Activated CD8-positive, alpha-beta T cell treated with anti-CD3 and anti-CD28 coated beads, Interleukin-2, amount 10 ng/mL, durations not matched to agents 7 days and 5 days (primary cell): ENCODE measurements at regions of chr6 and their contacts with region 1.

Region 1: GRCh38 chr6:52419809-52420670 is at the start of gene EFHC1:
- DNase-seq: peak; percentile 99
- ATAC-seq: peak; percentile 93
- H3K4me3 Mint-ChIP-seq: no peak within 1 kb of the TSS
- H3K27ac Mint-ChIP-seq: peak within 1 kb of the TSS; percentile 75
- H3K4me1 Mint-ChIP-seq: peaks cover 27% of the 10 kb centered on the region
- H3K27me3 Mint-ChIP-seq: no peaks in the 10 kb centered on the region
- total RNA-seq, gene EFHC1: 1.4 to 2.5 TPM

Region 2: DNA sequence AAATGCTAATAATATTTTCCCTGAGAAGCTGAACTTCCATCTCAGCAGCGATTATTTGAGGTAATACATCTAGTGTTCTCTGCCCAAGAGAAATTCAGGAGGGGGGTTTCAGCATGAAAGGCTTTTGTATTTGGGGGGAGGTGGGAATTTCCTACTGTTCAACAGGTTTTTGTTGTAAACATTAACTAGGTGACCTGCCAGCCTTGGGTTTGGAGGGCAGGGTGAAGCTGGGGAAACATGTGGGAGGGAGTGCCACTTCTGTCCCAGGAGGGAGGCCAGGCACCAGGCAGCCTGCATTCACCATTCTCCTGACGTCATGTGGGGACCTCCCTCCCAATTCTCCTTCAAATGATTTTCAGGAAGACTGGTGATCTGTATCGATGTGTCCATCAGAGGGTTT is 294.9 kb before region 1 on chr6:
- CTCF ChIA-PET with region 1: no interaction called
- POLR2A ChIA-PET with region 1: no interaction called
- DNase-seq: no peak
- ATAC-seq: no peak
- H3K4me3 Mint-ChIP-seq: no peak overlapping the region
- H3K27ac Mint-ChIP-seq: no peak overlapping the region
- H3K4me1 Mint-ChIP-seq: no peaks in the 10 kb centered on the region
- H3K27me3 Mint-ChIP-seq: peaks cover 21% of the 10 kb centered on the region

Region 3: DNA sequence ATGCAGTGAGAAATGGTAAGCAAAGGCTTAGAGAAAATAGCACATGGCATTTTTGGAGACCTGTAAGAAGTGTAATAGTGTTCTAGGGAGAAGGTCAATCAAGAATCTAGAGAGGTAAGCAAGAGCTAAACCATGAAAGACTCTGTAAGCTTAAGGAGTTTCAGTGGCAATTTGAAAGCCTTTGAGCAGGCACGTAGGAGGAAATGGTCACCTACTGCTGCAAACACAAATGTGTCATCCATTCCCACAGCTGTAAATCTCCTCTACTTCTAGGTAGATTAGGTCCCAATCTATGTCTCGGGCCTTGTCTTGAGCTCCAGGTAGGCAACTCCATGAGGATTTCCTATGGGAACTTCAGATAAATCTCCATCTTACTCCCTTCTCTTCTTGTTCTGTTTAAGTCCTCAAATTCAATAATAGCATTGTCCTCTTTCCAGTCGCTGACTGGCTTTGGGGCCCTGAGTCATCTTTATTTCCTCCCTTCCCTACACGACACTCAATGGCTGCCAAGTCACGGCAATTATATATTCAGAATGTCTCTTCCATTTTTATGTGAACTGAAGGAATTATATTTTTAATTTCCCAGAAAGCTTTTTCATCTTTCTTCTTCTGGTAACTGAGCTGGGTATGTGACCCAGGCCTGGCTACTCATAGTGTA is 82.3 kb before region 1 on chr6:
- CTCF ChIA-PET with region 1: no interaction called
- POLR2A ChIA-PET with region 1: no interaction called
- DNase-seq: peak; percentile 32
- ATAC-seq: no peak
- H3K4me3 Mint-ChIP-seq: no peak overlapping the region
- H3K27ac Mint-ChIP-seq: peak overlapping the region; percentile 53
- H3K4me1 Mint-ChIP-seq: peaks cover 72% of the 10 kb centered on the region
- H3K27me3 Mint-ChIP-seq: no peaks in the 10 kb centered on the region

Region 4: DNA sequence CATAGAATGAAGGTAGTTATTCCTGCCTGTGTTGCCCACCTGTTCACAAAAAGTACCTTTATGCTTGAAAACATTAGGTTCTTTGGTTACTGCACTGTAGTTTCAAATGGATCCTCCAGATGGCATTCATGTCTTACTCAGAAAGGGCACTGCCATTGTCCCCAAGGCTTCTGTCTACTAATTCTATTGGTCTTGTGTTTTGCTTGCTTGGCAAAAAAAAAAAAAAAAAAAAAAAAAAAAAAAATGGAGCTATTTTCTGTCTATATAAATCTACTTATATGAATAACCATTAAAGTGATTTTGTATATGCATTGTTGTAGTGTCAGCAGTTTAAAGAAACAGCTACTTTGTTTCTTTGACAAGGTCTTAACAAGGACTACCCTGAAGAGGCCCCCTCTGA is 12.6 kb before region 1 on chr6:
- CTCF ChIA-PET with region 1: interaction called, 79 read pairs
- POLR2A ChIA-PET with region 1: interaction called, 3 read pairs
- DNase-seq: peak; percentile 34
- ATAC-seq: peak; percentile 79
- H3K4me3 Mint-ChIP-seq: no peak overlapping the region
- H3K27ac Mint-ChIP-seq: no peak overlapping the region
- H3K4me1 Mint-ChIP-seq: peaks cover 2% of the 10 kb centered on the region
- H3K27me3 Mint-ChIP-seq: no peaks in the 10 kb centered on the region